RWPE1 (cell line): ENCODE measurements at regions of chr11 and their contacts with region 1.

Region 1: DNA sequence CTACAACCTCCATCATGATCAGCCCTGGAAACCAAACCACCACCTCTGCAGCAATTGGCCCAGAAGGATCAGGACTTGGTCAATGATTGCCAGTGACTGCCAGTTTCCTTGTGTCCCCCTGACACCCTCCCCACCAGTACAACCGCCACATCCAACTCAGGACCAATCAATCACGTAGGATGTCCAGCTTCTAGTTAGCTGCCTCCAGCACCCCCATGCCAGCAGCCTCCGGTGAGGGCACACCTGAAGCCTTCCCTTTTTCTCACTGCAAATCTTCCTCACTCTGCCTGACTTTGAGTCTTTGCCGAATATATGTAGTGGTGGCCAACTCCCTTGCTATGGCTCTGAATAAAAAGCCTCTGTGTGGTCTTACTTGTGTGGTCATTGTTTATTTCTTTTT is 20.3 kb downstream of the SLC35C1 start:
- DNase-seq: no peak
- H3K27ac ChIP-seq: no peak overlapping the region
- CTCF ChIP-seq: no peak

Region 2: DNA sequence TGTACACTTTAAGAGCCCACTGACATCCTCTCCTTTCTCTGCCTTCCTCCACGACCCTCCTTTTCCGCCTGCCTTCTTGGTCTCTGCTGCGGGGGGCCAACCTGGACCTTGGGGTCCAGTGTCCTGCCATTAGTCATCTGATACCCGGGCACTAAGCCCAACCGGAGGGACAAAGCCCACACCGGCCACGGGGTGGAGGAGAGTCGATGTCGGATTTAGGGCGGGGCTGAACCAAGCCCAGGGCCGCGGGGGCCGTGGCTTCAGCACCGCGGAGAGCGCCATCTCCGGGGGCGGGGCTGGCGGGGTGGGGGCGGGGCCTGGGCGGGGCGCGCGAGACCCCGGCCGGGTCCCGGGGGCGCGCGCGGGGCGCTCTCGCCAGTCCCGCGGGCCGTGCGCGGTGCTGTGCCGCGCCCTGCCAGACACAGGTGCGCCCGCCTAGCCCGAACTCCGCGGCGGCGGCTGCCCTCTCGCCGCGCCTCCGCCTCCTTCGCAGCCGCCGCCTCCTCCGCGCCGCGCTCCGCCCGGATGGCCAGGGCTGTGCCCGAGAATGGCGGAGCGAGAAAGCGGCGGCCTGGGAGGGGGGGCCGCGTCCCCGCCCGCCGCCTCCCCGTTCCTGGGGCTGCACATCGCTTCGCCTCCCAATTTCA is 60.1 kb after region 1 on chr11 and contains the start of gene MAPK8IP1:
- CTCF ChIA-PET with region 1: no interaction called
- POLR2A ChIA-PET with region 1: interaction called, 12 read pairs
- DNase-seq: peak; percentile 73
- H3K27ac ChIP-seq: no peak within 1 kb of the TSS
- CTCF ChIP-seq: no peak